Spleen (tissue), 13 donors: ENCODE measurements at regions of chr2 and their contacts with region 1.

Region 1: GRCh38 chr2:31233741-31234682 is at the start of gene EHD3:
- DNase-seq: peak; percentile 98
- H3K4me3 ChIP-seq: peak within 1 kb of the TSS; percentile 61 to 85 (median 74)
- H3K27ac ChIP-seq: peak within 1 kb of the TSS; percentile 44 to 84 (median 62)
- H3K4me1 ChIP-seq: peaks cover 13 to 54% (median 41%) of the 10 kb centered on the region in 6 donors
- H3K27me3 ChIP-seq: no peaks in the 10 kb centered on the region
- CTCF ChIP-seq: peak; percentile 13 to 64 (median 53)
- POLR2A ChIP-seq: peak in 1 of 3 donors; percentile 43
- total RNA-seq, gene EHD3: 13.5 to 27.2 (median 15.6) TPM

Region 2: DNA sequence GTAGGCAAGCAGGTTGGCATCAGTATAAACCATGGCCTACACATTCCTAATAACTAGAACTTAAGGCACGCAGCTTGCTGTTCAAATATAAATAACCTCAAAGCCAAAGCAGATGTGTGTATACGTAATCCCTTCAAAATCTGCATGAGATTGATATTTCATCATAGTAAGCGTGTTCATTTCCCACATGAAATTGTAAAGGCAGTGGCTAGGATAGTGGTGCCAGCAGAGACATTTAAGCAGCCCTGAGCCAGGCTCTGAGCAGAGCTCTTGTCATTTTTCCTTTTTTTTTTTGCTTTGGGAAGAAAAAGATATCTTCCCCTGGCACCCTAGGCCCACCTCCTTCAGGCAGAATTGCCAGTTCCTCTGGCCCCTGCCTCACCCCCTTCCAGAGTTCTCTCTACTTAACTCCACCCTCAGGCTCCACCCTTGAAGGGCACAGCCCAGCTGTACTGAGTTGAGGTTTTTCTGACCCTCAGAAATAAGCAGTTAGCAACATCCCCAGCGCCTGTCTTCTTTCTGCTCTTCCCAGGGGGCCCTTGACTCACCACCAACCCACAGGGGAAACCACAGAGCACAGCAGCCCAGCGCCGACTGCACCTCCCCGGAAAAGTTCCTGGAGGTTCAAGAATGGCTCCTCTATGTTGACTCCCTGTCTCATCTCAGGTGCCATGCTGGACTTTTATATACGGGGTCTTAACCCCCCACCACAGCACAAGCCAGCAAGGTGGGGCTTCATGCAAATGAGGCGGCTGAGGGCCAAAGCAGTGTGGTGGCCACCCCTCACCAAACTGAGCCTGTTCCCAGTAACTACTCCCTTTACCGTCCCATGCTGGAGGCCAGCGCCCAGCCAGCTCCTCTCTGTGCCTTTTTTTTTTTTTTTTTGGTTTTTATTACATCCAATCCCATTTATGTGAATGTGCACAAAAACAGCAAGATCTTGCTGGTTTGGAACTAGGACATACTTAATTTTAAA is 84.6 kb after region 1 on chr2:
- intact Hi-C with region 1: loop called (anchors 10 kb)
- DNase-seq: peak; percentile 79
- H3K4me3 ChIP-seq: peak overlapping the region in 1 of 8 donors; percentile 32
- H3K27ac ChIP-seq: peak overlapping the region; percentile 35 to 89 (median 73)
- H3K4me1 ChIP-seq: peaks cover 14 to 54% (median 33%) of the 10 kb centered on the region in 6 donors
- H3K27me3 ChIP-seq: no peaks in the 10 kb centered on the region
- CTCF ChIP-seq: no peak
- POLR2A ChIP-seq: no peak

Region 3: GRCh38 chr2:31372097-31372496 is 138.1 kb after region 1 on chr2:
- intact Hi-C with region 1: no loop called
- DNase-seq: no peak
- H3K4me3 ChIP-seq: no peak overlapping the region
- H3K27ac ChIP-seq: no peak overlapping the region
- H3K4me1 ChIP-seq: no peaks in the 10 kb centered on the region
- H3K27me3 ChIP-seq: no peaks in the 10 kb centered on the region
- CTCF ChIP-seq: no peak
- POLR2A ChIP-seq: no peak